ENCODE measurements at regions of chr2 and their contacts with region 1.

Region 1: DNA sequence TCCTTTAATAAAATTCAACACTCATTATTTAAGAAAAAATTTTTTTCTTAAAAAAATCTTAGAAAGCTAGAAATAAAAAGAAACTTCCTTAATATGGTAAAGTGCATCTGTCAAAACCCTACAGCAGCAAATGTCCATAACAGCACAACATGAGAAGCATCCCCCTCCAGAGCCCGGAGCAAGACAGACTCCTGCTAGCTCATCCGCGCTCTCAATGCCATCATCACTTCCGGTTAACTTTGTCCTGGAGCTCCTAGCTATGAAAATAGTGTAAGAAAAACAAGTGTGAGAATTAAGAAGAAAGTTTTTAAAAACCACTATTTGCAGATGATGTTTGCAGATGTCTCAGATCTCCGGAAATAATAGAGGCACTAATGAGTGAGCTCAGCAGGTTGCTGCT is 103.1 kb downstream of the TEX51 start:
- DNase-seq: peak; percentile 59
- H3K4me3 ChIP-seq: no peak overlapping the region
- H3K27ac ChIP-seq: no peak overlapping the region
- H3K4me1 ChIP-seq: no peaks in the 10 kb centered on the region
- H3K27me3 ChIP-seq: no peaks in the 10 kb centered on the region
- CTCF ChIP-seq: no peak

Region 2: GRCh38 chr2:126886211-126886915 is 115.4 kb before region 1 on chr2:
- CTCF ChIA-PET with region 1: interaction called, 10 read pairs
- POLR2A ChIA-PET with region 1: no interaction called
- intact Hi-C with region 1: no loop called
- DNase-seq: peak; percentile 76
- H3K4me3 ChIP-seq: peak overlapping the region; percentile 29
- H3K27ac ChIP-seq: no peak overlapping the region
- H3K4me1 ChIP-seq: peaks cover 2% of the 10 kb centered on the region
- H3K27me3 ChIP-seq: no peaks in the 10 kb centered on the region
- CTCF ChIP-seq: peak; percentile 91